ENCODE measurements at regions of chr13 and their contacts with region 1.

Region 1: DNA sequence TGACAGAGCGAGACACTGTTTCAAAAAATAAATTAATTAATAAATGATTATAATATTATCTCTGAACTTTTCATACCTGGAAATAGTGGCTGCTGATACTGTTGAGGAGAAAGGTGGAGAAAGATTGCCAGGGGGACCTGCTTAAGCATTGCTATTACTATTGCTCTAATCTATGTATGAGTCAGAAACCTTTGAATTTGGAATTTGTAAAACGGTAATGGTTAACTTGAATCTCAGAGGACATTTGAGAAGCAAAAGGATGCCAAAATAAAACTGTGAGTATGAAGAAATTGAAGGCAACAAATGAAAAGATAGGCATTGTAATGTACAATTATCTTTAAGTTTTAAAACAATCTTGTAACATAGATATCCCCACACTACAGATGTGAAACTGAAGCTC is 5.2 kb downstream of the MRPL57 start:
- DNase-seq: no peak
- H3K4me3 Mint-ChIP-seq: no peak overlapping the region
- H3K27ac Mint-ChIP-seq: no peak overlapping the region
- H3K4me1 Mint-ChIP-seq: peaks cover 10% of the 10 kb centered on the region
- H3K27me3 Mint-ChIP-seq: no peaks in the 10 kb centered on the region

Region 2: DNA sequence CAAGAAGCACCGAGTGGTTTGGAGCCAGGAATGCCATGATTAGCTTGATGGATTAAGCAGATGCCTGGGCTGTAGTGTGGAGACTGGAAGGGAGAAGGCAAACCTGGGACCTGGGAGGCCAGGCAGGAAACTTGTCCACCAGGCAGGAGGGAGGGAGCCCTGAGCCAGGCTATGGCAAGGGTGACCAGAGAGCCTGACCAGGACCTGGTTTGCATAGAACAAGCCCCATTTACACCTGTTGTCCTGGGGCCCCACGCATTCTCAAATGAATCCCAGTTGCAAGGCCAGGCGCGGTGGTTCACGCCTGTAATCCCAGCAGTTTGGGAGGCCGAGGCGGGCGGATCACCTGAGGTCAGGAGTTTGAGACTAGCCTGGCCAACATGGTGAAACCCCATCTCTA is 70.1 kb before region 1 on chr13:
- intact Hi-C with region 1: loop called (anchors 2 kb)
- DNase-seq: no peak
- H3K4me3 Mint-ChIP-seq: no peak overlapping the region
- H3K27ac Mint-ChIP-seq: no peak overlapping the region
- H3K4me1 Mint-ChIP-seq: no peaks in the 10 kb centered on the region
- H3K27me3 Mint-ChIP-seq: no peaks in the 10 kb centered on the region

Region 3: GRCh38 chr13:21202764-21203538 is 21.3 kb after region 1 on chr13:
- intact Hi-C with region 1: no loop called
- DNase-seq: no peak
- H3K4me3 Mint-ChIP-seq: no peak overlapping the region
- H3K27ac Mint-ChIP-seq: no peak overlapping the region
- H3K4me1 Mint-ChIP-seq: no peaks in the 10 kb centered on the region
- H3K27me3 Mint-ChIP-seq: peaks cover 2% of the 10 kb centered on the region

Region 4: GRCh38 chr13:21216332-21216731 is 34.7 kb after region 1 on chr13:
- intact Hi-C with region 1: no loop called
- DNase-seq: no peak
- H3K4me3 Mint-ChIP-seq: no peak overlapping the region
- H3K27ac Mint-ChIP-seq: no peak overlapping the region
- H3K4me1 Mint-ChIP-seq: peaks cover 17% of the 10 kb centered on the region
- H3K27me3 Mint-ChIP-seq: peaks cover 40% of the 10 kb centered on the region

Measured in activated CD4-positive, alpha-beta T cell treated with anti-CD3 and anti-CD28 coated beads, Interleukin-2, amount 10 ng/mL, durations not matched to agents 24 days and 14 days (primary cell).